ENCODE measurements at regions of chr4 and their contacts with region 1.

Region 1: DNA sequence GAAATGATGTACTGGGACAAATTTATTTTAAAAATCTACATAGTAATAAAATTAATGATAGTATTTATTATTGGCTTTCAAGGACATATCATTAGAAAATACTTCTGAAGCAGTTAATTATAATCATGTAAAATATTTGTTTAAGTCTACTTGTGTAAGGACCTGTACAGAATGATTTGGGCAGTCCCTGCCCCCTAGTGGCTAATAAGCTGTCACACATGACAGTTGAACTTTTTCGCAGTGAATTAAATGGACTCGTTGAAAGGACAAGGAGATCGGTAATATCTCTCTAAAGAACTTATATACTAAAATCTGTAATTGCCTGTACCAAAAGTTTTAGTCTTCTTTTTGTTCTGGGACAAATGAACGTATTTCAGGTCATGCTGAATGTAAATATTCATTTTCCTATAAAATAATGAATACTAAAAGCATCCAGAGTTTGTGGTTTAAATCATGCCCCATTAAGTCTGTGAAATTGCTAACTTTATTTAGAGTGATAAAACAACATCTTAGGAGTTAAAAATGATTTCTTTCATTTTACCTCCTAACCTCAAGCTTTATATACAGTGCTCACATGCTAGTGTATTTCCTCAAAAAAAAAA is 13.6 kb downstream of the EXOC1 start:
- DNase-seq: peak; percentile 20
- ATAC-seq: peak; percentile 62
- H3K4me3 Mint-ChIP-seq: no peak overlapping the region
- H3K27ac Mint-ChIP-seq: no peak overlapping the region
- H3K4me1 Mint-ChIP-seq: peaks cover 20% of the 10 kb centered on the region
- H3K27me3 Mint-ChIP-seq: no peaks in the 10 kb centered on the region

Region 2: DNA sequence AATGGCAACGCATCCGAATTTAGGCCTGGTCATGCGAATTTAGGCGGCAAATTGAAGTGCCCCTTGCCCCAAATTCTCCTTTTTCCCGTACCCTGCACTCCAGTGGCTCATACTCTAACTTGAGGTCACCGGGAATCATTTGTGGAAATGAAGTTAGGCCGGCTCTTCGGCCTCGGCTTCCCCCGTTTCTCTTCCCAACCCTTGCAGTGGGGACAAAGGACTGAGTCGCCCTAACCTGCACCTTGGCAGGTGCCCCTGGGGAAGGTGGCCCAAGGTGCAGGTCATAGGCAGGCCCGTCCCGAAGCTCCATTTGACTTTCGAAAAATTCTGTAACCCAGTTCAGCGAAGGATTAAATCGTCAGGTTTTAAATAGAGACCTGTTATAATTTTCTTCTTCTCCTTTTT is 520.2 kb before region 1 on chr4:
- CTCF ChIA-PET with region 1: no interaction called
- POLR2A ChIA-PET with region 1: no interaction called
- intact Hi-C with region 1: no loop called
- DNase-seq: no peak
- ATAC-seq: no peak
- H3K4me3 Mint-ChIP-seq: peak overlapping the region; percentile 82
- H3K27ac Mint-ChIP-seq: peak overlapping the region; percentile 79
- H3K4me1 Mint-ChIP-seq: peaks cover 25% of the 10 kb centered on the region
- H3K27me3 Mint-ChIP-seq: no peaks in the 10 kb centered on the region

Region 3: GRCh38 chr4:55754754-55755350 is 112.2 kb before region 1 on chr4:
- CTCF ChIA-PET with region 1: interaction called, 3 read pairs
- POLR2A ChIA-PET with region 1: no interaction called
- intact Hi-C with region 1: loop called in 1 of 2 experiments (anchors 5 kb)
- DNase-seq: no peak
- ATAC-seq: peak; percentile 25
- H3K4me3 Mint-ChIP-seq: no peak overlapping the region
- H3K27ac Mint-ChIP-seq: no peak overlapping the region
- H3K4me1 Mint-ChIP-seq: peaks cover 4% of the 10 kb centered on the region
- H3K27me3 Mint-ChIP-seq: peaks cover 3% of the 10 kb centered on the region

Region 4: GRCh38 chr4:55906999-55907398 is 39.9 kb after region 1 on chr4:
- CTCF ChIA-PET with region 1: no interaction called
- POLR2A ChIA-PET with region 1: no interaction called
- intact Hi-C with region 1: loop called in 1 of 2 experiments (anchors 1 kb)
- DNase-seq: no peak
- ATAC-seq: peak; percentile 91
- H3K4me3 Mint-ChIP-seq: no peak overlapping the region
- H3K27ac Mint-ChIP-seq: peak overlapping the region; percentile 75
- H3K4me1 Mint-ChIP-seq: peaks cover 24% of the 10 kb centered on the region
- H3K27me3 Mint-ChIP-seq: no peaks in the 10 kb centered on the region

Region 5: DNA sequence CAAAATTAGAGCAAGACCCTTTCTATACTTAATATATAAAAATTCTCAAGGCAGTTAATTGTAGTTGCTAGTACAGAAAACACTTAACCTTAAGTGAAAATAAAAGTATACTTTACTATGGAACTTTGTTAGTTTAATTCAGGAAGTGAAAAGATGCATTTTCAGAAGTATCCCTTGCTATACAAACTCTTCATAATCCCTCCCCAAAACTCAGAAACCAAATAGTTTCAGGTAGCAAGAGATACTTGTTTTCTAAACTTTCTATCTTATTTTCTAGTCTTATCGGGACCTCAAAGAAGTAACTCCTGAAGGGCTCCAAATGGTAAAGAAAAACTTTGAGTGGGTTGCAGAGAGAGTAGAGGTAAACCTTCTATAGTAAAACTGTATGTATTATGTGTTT is 583.3 kb after region 1 on chr4:
- CTCF ChIA-PET with region 1: no interaction called
- POLR2A ChIA-PET with region 1: no interaction called
- intact Hi-C with region 1: no loop called
- DNase-seq: no peak
- ATAC-seq: no peak
- H3K4me3 Mint-ChIP-seq: no peak overlapping the region
- H3K27ac Mint-ChIP-seq: no peak overlapping the region
- H3K4me1 Mint-ChIP-seq: peaks cover 14% of the 10 kb centered on the region
- H3K27me3 Mint-ChIP-seq: no peaks in the 10 kb centered on the region